ENCODE measurements at regions of chr9 and their contacts with region 1.

Region 1: DNA sequence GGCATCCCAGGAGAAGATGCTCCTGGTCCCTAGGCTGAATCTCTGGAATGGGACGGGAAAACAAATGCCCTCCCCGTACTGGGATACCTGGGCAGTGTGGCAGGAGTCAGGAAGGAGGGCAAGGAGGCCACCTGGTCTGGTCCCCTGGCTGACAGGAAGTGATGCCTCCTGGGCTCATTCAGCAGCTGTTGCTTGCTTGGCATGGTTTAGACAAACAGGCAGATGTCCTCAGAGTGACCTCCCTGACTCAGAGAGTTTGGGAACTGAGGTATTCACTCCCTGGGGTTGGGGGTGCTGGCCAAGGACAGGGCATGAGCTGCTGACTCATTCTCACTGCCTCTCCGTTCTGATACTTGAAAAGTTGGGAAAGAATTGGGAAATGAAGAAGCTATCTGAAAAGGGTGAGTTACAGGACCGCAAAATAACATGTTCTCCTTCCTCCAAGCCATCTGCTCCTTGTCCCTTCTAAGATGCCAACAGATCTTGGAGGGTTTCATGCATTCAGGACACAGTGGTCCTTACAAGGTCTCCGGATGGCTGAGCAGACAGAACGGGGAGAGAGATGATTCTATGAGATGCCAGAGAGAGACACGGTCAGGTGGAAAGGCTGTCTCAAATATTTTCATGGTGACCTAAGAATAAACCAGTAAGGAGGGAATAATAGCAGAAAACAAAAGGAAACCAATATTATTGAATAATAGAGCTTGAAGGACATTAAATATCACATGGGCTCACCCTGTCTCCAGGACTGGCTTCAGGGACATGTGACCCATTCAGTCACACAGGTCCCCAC is 534.5 kb downstream of the BNC2 start:
- DNase-seq: peak; percentile 98
- H3K4me3 ChIP-seq: no peak overlapping the region
- H3K27ac ChIP-seq: peak overlapping the region; percentile 84
- H3K4me1 ChIP-seq: peaks cover 33% of the 10 kb centered on the region
- H3K27me3 ChIP-seq: no peaks in the 10 kb centered on the region
- CTCF ChIP-seq: no peak

Region 2: DNA sequence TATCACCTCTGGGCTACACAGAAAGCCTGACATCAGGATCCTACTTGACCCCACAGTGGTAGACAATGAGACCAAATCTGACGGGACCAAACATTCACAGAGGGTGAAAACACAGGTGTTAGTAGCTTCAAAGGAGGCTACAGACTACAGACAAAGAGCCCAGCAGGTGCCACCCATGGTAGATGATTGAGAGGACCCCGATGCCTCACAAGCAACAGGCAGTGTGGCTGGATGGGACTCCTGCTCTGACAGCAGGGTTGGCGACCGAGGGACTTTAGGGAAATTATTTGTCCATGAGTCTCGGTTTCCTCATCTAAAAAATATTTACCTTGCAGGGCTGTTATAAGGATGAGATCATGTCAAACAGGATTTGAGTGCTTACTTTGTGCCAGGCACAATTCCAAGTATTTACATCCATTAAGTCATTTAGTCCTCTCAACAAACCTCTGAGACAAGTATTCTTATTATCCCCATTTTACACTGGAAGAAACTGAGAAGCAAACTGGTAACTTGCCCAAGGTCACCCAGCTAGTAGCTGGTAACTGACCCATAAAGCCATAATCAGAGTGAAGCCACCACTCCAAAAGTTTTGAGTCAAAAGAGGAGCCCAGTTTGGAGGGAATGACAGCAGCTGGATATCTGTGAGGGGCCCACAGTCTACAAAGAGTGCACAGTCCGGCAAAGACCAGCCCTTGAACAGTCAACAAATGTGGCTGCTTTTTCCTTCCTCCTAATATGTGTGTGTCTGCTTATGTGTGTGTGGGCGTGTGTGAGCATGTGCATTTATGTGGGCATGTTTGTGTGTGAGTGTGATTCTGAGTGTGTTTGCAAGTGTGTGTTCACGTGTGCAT is 32.5 kb after region 1 on chr9:
- CTCF ChIA-PET with region 1: no interaction called
- dilution Hi-C with region 1: no loop called
- in situ Hi-C with region 1: no loop called
- intact Hi-C with region 1: no loop called
- DNase-seq: peak; percentile 58
- H3K4me3 ChIP-seq: no peak overlapping the region
- H3K27ac ChIP-seq: no peak overlapping the region
- H3K4me1 ChIP-seq: peaks cover 5% of the 10 kb centered on the region
- H3K27me3 ChIP-seq: no peaks in the 10 kb centered on the region
- CTCF ChIP-seq: no peak

Region 3: GRCh38 chr9:16509997-16510396 is 174.0 kb after region 1 on chr9:
- CTCF ChIA-PET with region 1: no interaction called
- dilution Hi-C with region 1: no loop called
- in situ Hi-C with region 1: no loop called
- intact Hi-C with region 1: loop called (anchors 10 kb)
- DNase-seq: peak; percentile 44
- H3K4me3 ChIP-seq: no peak overlapping the region
- H3K27ac ChIP-seq: no peak overlapping the region
- H3K4me1 ChIP-seq: peaks cover 7% of the 10 kb centered on the region
- H3K27me3 ChIP-seq: no peaks in the 10 kb centered on the region
- CTCF ChIP-seq: no peak